ENCODE measurements at regions of chr10 and their contacts with region 1.

Region 1: DNA sequence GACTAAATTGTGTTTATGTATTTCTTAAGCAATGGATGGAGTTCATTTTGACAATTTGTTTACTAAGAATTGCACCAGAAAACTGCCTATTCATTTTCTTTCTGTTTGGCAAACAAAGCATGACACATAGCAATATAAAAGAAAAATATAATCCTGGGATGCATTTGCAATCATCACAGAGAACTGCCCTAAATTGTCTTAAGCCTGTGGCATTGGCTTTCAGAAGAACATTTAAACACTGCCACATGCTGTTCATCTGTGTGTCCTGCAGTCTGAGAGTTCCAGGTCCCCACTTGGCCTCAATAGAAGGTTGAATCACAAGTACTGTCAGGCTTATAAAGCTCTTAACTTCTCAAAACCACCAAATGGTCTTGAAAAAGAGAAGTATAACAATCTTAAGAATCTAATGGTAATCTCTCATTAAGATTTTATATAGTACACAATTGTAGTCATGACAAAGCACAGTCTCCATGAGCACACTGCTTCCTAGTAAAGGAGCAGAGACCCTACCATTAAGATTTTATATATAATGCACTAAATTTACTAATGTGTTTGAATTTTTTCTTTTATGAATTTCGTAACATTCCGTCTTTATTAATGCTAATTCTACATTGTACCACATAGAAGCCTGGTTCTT is 29.9 kb downstream of the RNLS start:
- DNase-seq: peak in 1 of 2 donors; percentile 54
- ATAC-seq: peak; percentile 72 to 96 (median 86)
- H3K4me3 ChIP-seq: no peak overlapping the region
- H3K27ac ChIP-seq: no peak overlapping the region
- H3K4me1 ChIP-seq: peaks cover 0 to 3% (median 0%) of the 10 kb centered on the region in 9 donors
- H3K27me3 ChIP-seq: no peaks in the 10 kb centered on the region
- CTCF ChIP-seq: peak; percentile 44 to 85 (median 78)

Region 2: DNA sequence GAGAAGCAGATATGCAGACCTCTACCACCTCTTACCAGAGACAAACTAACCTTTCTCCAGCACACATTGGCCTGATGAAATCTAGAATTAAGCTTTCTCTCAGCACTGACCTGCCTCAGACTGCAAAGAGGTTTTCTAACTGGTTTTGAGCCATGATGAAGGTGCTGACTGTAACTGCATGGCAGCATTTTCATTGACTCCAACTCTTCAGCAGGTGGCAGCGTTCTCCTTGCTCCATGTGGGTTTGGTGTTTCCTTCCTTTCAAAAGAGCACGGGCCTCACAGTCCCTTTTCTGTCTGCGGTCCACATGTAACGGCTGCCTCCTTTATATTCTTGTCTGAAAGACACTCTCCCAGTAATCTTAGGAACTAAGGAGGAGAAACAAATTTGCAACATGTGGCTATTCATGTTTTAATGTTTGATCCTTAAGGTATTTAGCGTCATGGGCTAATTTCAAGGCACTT is 702.5 kb before region 1 on chr10:
- intact Hi-C with region 1: loop called in 9 of 10 experiments (anchors 2 to 5 kb)
- DNase-seq: peak; percentile 24 to 67
- ATAC-seq: peak; percentile 79 to 98 (median 92)
- H3K4me3 ChIP-seq: no peak overlapping the region
- H3K27ac ChIP-seq: no peak overlapping the region
- H3K4me1 ChIP-seq: peaks cover 0 to 5% (median 0%) of the 10 kb centered on the region in 9 donors
- H3K27me3 ChIP-seq: no peaks in the 10 kb centered on the region
- CTCF ChIP-seq: peak; percentile 37 to 79 (median 71)

Region 3: DNA sequence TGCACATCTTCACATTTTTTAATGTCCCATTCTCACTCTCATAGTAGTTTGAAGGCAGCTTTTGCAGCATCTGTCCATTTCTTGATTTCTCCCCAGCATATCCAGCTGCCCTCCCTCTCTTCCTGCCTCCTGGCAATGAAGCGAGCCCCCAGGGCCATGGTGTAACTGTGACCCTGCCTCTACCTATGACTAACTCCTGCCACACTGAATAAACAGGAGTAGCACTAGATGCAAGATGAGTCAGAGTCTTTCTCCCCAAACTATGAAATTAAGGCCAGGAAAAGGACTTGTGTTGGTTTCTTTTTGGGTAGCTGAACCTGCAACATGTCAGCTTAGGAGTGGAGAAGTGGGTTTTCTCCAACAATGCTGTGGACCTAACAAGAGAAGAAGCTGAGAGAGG is 299.1 kb before region 1 on chr10:
- intact Hi-C with region 1: loop called in 1 of 10 experiments (anchors 10 kb)
- DNase-seq: no peak
- ATAC-seq: peak in 1 of 8 donors; percentile 72
- H3K4me3 ChIP-seq: no peak overlapping the region
- H3K27ac ChIP-seq: peak overlapping the region in 3 of 10 donors; percentile 2 to 87 (median 26)
- H3K4me1 ChIP-seq: peaks cover 0 to 31% (median 3%) of the 10 kb centered on the region in 9 donors
- H3K27me3 ChIP-seq: no peaks in the 10 kb centered on the region
- CTCF ChIP-seq: no peak

Region 4: GRCh38 chr10:88361494-88361893 is 191.7 kb before region 1 on chr10:
- intact Hi-C with region 1: no loop called
- DNase-seq: no peak
- ATAC-seq: no peak
- H3K4me3 ChIP-seq: no peak overlapping the region
- H3K27ac ChIP-seq: no peak overlapping the region
- H3K4me1 ChIP-seq: no peaks in the 10 kb centered on the region
- H3K27me3 ChIP-seq: no peaks in the 10 kb centered on the region
- CTCF ChIP-seq: no peak

Region 5: GRCh38 chr10:88392222-88392621 is 161.0 kb before region 1 on chr10:
- intact Hi-C with region 1: loop called in 2 of 10 experiments (anchors 10 kb)
- DNase-seq: no peak
- ATAC-seq: no peak
- H3K4me3 ChIP-seq: no peak overlapping the region
- H3K27ac ChIP-seq: no peak overlapping the region
- H3K4me1 ChIP-seq: peaks cover 0 to 26% (median 14%) of the 10 kb centered on the region in 9 donors
- H3K27me3 ChIP-seq: no peaks in the 10 kb centered on the region
- CTCF ChIP-seq: no peak

Region 6: DNA sequence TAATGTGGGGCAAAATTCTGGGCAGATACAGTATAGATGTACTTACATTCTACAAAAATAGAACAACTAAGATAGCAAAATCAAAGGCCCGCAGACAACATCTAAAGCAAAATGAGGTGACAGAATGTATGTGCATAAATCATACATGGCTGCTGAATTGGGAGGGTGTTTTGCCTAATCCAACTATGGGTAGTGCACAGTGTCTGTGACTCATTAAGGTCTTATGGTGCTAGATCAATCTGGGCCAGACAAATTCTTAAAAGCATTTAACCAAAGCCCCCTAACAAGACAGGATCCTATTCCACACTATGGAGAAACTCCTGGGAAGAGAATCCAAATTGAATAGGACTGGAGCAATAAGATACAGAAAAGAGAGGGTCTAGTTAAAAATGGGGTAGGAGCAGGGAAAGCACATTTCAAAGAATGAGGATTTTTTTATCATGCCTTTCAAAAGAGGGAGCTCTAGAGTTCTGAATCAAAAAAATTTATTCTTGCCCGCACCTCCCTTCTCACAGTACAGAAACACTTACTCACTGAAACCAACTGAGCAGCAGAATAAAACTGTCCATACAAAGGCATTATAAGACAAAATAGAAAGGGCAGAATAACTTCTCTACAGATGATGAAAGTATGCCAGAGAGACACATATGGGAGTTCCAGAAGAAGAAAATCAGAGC is 151.4 kb before region 1 on chr10:
- intact Hi-C with region 1: loop called in 8 of 10 experiments (anchors 2 to 10 kb)
- DNase-seq: no peak
- ATAC-seq: no peak
- H3K4me3 ChIP-seq: no peak overlapping the region
- H3K27ac ChIP-seq: no peak overlapping the region
- H3K4me1 ChIP-seq: peaks cover 0 to 7% (median 0%) of the 10 kb centered on the region in 9 donors
- H3K27me3 ChIP-seq: no peaks in the 10 kb centered on the region
- CTCF ChIP-seq: peak in 5 of 9 donors; percentile 28 to 41 (median 35)

Region 7: DNA sequence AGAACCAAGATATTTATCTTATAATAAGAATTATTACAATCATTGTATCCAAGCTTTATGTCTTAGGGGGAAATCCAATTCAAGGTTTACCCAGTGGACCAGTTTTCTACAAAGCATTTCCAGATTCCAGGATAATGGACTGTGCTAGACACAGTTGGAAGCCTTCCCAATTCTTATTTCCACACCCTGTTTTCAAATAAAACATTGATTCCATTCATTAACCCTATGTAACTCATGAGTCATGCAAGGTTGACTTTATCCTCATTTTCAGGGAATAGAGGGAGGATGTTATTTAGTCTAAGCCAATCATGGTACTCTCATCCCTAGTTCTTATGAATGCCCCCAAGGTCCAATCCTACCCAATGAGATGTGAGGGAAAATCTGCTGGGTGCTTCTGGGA is 115.8 kb before region 1 on chr10:
- intact Hi-C with region 1: loop called in 1 of 10 experiments (anchors 10 kb)
- DNase-seq: no peak
- ATAC-seq: no peak
- H3K4me3 ChIP-seq: no peak overlapping the region
- H3K27ac ChIP-seq: no peak overlapping the region
- H3K4me1 ChIP-seq: peaks cover 0 to 7% (median under 1%) of the 10 kb centered on the region in 9 donors
- H3K27me3 ChIP-seq: no peaks in the 10 kb centered on the region
- CTCF ChIP-seq: no peak

Measured in heart right ventricle (tissue), 16 donors.